Activated CD8-positive, alpha-beta T cell treated with anti-CD3 and anti-CD28 coated beads for 36 hours (primary cell): ENCODE measurements at regions of chr6 and their contacts with region 1.

Region 1: GRCh38 chr6:160930547-160931377 is 60.8 kb upstream of the MAP3K4 start:
- DNase-seq: peak; percentile 51
- ATAC-seq: peak; percentile 73
- H3K4me3 Mint-ChIP-seq: peak overlapping the region; percentile 28
- H3K27ac Mint-ChIP-seq: no peak overlapping the region
- H3K4me1 Mint-ChIP-seq: no peaks in the 10 kb centered on the region
- H3K27me3 Mint-ChIP-seq: peaks cover 29% of the 10 kb centered on the region
- CTCF ChIP-seq: peak; percentile 89

Region 2: DNA sequence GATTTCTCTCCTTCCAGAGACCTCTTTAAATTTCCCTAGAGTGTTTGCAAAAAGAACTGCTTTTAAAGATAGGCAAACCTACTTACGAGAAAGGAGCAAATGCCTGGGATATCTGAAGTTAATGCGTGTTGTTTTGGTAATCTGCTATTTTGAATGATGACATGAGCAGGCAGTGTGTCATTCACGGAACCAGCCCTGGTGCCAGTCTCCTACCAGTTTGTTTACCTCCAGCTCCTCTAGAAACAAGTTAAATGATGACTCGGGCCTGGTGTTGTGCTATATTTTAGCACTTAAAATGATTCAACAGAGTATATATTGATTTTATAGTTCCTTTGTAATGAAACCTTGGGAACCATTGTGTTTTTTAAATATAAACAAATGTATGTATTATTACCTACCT is 19.7 kb after region 1 on chr6:
- CTCF ChIA-PET with region 1: interaction called, 15 read pairs
- POLR2A ChIA-PET with region 1: no interaction called
- intact Hi-C with region 1: no loop called
- DNase-seq: no peak
- ATAC-seq: no peak
- H3K4me3 Mint-ChIP-seq: no peak overlapping the region
- H3K27ac Mint-ChIP-seq: no peak overlapping the region
- H3K4me1 Mint-ChIP-seq: no peaks in the 10 kb centered on the region
- H3K27me3 Mint-ChIP-seq: peaks cover 18% of the 10 kb centered on the region
- CTCF ChIP-seq: no peak

Region 3: DNA sequence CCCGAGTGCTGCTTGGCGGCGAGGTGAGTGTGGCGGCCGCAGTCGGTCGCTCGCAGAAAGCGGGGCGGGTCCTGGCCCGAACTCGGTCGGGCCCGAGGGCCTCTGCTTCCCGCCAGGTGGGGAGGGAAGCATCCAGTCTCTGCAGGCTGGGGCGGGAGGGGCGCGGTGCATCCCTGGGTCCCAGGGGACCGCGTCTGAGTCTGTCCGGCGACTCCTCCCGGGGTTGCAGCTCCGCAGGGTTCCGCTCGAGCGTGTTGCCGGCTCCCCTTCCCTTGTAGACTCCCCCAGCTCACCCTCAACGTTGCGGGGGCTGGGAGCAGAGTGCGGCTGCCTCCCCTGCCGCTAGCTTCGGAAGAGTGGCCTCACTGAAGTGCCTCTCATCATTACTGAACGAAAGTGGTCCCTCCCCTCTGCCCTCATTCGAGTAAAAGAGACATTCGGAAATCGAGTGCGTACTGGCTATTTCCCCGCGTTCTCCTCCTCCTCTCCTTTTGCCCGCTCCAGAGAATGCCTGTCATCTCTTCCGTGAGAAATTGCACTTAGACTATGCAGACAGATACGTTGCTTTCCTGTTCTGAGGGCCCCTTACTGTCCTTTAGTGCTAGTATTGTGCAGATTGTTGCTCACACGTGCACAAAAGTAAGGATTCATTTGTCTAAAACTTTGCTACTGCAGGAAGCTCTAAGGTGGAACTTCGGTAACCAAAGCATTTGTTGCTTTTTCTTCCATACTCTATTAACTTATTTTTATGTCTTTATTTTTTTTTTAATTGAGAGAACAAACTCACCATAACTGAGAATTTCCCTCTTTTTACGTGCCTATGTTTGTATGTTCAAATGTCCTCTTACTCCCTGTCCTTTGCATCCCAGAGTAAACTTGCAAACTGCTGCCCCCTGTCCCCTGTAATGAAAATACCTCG is 61.6 kb after region 1 on chr6:
- CTCF ChIA-PET with region 1: interaction called, 20 read pairs
- POLR2A ChIA-PET with region 1: no interaction called
- intact Hi-C with region 1: no loop called
- DNase-seq: peak; percentile 60
- ATAC-seq: peak; percentile 65
- H3K4me3 Mint-ChIP-seq: peak overlapping the region; percentile 99
- H3K27ac Mint-ChIP-seq: peak overlapping the region; percentile 95
- H3K4me1 Mint-ChIP-seq: peaks cover 35% of the 10 kb centered on the region
- H3K27me3 Mint-ChIP-seq: no peaks in the 10 kb centered on the region
- CTCF ChIP-seq: peak; percentile 36

Region 4: DNA sequence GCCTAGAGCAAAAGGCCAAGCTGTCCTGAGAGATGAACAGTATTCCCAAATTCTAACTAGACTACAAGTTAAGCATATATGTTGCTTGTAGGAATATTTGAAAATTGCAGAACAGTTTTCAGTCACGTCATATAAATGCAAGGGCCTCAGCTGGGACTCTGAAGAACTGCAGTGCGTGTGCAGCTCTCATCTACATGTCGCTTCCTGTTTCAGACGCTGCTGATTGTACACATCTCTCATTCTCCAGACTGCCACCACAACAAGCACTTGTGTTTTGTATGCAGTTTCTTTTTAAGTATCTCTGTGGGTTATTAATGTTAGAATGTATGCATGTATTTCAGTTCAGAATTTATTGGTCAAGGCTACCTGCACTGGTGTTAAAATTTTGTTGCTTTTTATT is 180.5 kb after region 1 on chr6:
- CTCF ChIA-PET with region 1: no interaction called
- POLR2A ChIA-PET with region 1: no interaction called
- intact Hi-C with region 1: loop called (anchors 10 kb)
- DNase-seq: peak; percentile 25
- ATAC-seq: peak; percentile 90
- H3K4me3 Mint-ChIP-seq: no peak overlapping the region
- H3K27ac Mint-ChIP-seq: peak overlapping the region; percentile 76
- H3K4me1 Mint-ChIP-seq: peaks cover 19% of the 10 kb centered on the region
- H3K27me3 Mint-ChIP-seq: no peaks in the 10 kb centered on the region
- CTCF ChIP-seq: no peak